ENCODE measurements at regions of chr21 and their contacts with region 1.

Region 1: GRCh38 chr21:28516991-28517592 is 475.6 kb downstream of the LTN1 start:
- DNase-seq: peak; percentile 77
- ATAC-seq: peak; percentile 94
- H3K4me3 ChIP-seq: no peak overlapping the region
- H3K27ac ChIP-seq: peak overlapping the region; percentile 27
- H3K4me1 ChIP-seq: peaks cover 13% of the 10 kb centered on the region
- H3K27me3 ChIP-seq: no peaks in the 10 kb centered on the region
- CTCF ChIP-seq: peak; percentile 91

Region 2: GRCh38 chr21:28261298-28261697 is 255.8 kb before region 1 on chr21:
- CTCF ChIA-PET with region 1: no interaction called
- POLR2A ChIA-PET with region 1: interaction called, 13 read pairs
- intact Hi-C with region 1: no loop called
- DNase-seq: peak; percentile 48
- ATAC-seq: peak; percentile 65
- H3K4me3 ChIP-seq: no peak overlapping the region
- H3K27ac ChIP-seq: no peak overlapping the region
- H3K4me1 ChIP-seq: peaks cover 8% of the 10 kb centered on the region; the same call in 1 of the 2 replicates
- H3K27me3 ChIP-seq: no peaks in the 10 kb centered on the region
- CTCF ChIP-seq: no peak

Region 3: DNA sequence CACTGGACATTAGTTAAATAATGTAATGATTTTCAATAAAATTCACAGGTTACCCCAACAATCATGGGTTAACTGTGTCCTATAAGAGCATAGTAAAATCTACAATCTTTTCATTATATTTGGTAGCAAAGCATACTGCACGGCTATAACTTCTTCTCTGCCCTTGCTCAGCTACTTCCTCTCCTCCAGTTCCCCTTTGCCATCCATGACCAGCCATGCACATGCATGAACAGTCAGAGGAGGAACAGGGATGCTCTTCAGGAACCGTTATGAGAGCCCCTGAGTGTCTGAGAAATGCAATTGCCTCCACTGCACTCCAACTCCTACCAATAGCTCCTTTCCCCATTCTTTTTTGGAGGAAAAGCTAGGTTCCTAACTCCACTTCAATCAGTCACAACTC is 171.2 kb before region 1 on chr21:
- CTCF ChIA-PET with region 1: no interaction called
- POLR2A ChIA-PET with region 1: no interaction called
- intact Hi-C with region 1: loop called (anchors 5 kb)
- DNase-seq: no peak
- ATAC-seq: no peak
- H3K4me3 ChIP-seq: no peak overlapping the region
- H3K27ac ChIP-seq: no peak overlapping the region
- H3K4me1 ChIP-seq: no peaks in the 10 kb centered on the region
- H3K27me3 ChIP-seq: no peaks in the 10 kb centered on the region
- CTCF ChIP-seq: no peak